Heart left ventricle (tissue), 16 donors: ENCODE measurements at regions of chr6 and their contacts with region 1.

Region 1: DNA sequence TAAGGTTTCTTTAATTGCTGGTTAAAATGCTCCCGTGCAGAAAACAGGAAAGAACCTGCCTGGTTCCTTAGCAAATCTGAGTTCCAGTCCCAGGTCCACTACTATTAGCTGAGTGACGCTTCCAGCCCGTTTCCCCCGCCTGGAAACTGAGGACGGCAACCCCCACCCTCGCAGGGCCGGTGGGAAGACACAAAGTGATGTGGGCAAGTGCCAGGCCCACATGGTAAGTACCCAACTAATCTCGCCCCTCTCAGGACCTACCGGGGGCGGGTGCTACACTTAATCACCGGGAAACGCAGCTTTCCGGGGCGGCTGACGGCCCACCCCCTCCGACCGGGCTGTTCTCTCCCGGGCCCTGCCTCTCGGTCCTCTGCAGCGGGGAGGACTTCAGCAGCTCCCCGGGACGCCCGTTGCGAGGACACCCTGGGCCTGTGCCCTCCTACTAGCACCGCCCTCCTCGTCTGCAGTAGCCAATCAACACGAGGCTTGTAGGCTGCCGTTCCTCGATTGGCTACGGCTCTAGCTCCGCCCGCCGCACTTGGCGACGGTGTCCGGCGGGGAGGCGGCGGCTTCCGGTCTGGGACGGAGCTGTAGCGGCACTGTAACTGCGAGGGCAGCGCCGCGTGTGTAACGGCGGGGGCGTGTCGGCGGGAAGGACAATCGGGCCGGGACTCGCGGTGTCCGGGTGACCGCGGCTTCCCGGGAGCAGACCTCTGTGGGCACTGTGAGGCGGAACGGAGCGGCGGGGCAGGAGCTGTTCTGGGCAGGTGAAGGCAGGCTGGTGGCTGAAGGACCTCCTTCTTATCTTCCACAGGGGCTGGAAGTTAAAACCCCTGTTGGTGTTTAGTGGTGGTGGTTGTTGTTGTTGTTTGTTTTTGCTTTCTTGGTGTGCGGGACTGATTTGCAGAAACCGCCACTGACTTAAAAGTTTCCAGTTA is at the start of gene ZBTB9:
- DNase-seq: peak; percentile 96 to 98 (median 97)
- ATAC-seq: peak; percentile 99 to 100 (median 100)
- H3K4me3 ChIP-seq: peak within 1 kb of the TSS; percentile 71 to 99 (median 88)
- H3K27ac ChIP-seq: peak within 1 kb of the TSS; percentile 21 to 88 (median 86)
- H3K4me1 ChIP-seq: peaks cover 0 to 39% (median 17%) of the 10 kb centered on the region in 12 donors
- H3K27me3 ChIP-seq: no peaks in the 10 kb centered on the region
- CTCF ChIP-seq: no peak
- POLR2A ChIP-seq: peak; percentile 83 to 96
- total RNA-seq, gene ZBTB9: 2.5 to 6.4 (median 4.7) TPM

Region 2: DNA sequence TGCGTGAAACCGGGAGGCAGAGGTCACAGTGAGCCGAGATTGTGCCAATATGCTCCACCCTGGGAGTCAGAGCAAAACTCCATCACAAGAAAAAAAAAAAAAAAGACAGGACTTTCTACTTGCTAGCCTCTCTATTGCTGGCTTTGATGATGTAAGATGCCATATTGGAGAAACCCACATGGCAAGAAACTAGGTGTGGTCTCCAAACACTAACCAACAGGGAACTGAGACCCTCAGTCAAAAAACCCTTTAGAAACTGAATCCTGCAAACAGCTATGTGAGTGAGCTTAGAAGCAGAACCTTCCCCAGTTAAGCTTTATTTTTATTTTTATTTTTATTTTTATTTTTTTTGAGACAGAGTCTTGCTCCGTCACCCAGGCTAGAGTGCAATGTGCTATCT is 118.4 kb before region 1 on chr6:
- intact Hi-C with region 1: no loop called
- DNase-seq: no peak
- ATAC-seq: no peak
- H3K4me3 ChIP-seq: no peak overlapping the region
- H3K27ac ChIP-seq: no peak overlapping the region
- H3K4me1 ChIP-seq: no peaks in the 10 kb centered on the region
- H3K27me3 ChIP-seq: no peaks in the 10 kb centered on the region
- CTCF ChIP-seq: no peak
- POLR2A ChIP-seq: no peak

Region 3: GRCh38 chr6:33410050-33410710 is 44.1 kb before region 1 on chr6:
- intact Hi-C with region 1: loop called in 1 of 10 experiments (anchors 1 kb)
- DNase-seq: peak; percentile 98 to 99 (median 99)
- ATAC-seq: peak; percentile 85 to 92 (median 91)
- H3K4me3 ChIP-seq: peak overlapping the region; percentile 68 to 100 (median 94)
- H3K27ac ChIP-seq: peak overlapping the region; percentile 94 to 100 (median 99)
- H3K4me1 ChIP-seq: peaks cover 0 to 24% (median 14%) of the 10 kb centered on the region in 12 donors
- H3K27me3 ChIP-seq: no peaks in the 10 kb centered on the region
- CTCF ChIP-seq: no peak
- POLR2A ChIP-seq: peak in 1 of 2 donors; percentile 64

Region 4: GRCh38 chr6:33570806-33571636 is 116.7 kb after region 1 on chr6:
- intact Hi-C with region 1: loop called in 1 of 10 experiments (anchors 5 kb)
- DNase-seq: peak; percentile 84 to 90 (median 87)
- ATAC-seq: peak; percentile 93 to 97 (median 94)
- H3K4me3 ChIP-seq: peak overlapping the region; percentile 39 to 75 (median 67)
- H3K27ac ChIP-seq: peak overlapping the region; percentile 70 to 92 (median 88)
- H3K4me1 ChIP-seq: peaks cover 0 to 16% (median 7%) of the 10 kb centered on the region in 12 donors
- H3K27me3 ChIP-seq: no peaks in the 10 kb centered on the region
- CTCF ChIP-seq: peak in 1 of 12 donors; percentile 17
- POLR2A ChIP-seq: peak in 1 of 2 donors; percentile 42